Esophagus muscularis mucosa (tissue), 4 donors: ENCODE measurements at regions of chr12 and their contacts with region 1.

Region 1: GRCh38 chr12:95820102-95820703 is 29.6 kb upstream of the NTN4 start:
- DNase-seq: no peak
- H3K4me3 ChIP-seq: no peak overlapping the region
- H3K27ac ChIP-seq: no peak overlapping the region
- H3K4me1 ChIP-seq: peaks cover 0 to 4% (median 1%) of the 10 kb centered on the region in 4 donors
- H3K27me3 ChIP-seq: no peaks in the 10 kb centered on the region
- CTCF ChIP-seq: peak; percentile 40 to 54 (median 53)
- EP300 ChIP-seq: no peak
- POLR2A ChIP-seq: no peak

Region 2: GRCh38 chr12:95582230-95583058 is 237.8 kb before region 1 on chr12:
- intact Hi-C with region 1: loop called (anchors 2 kb)
- DNase-seq: no peak
- H3K4me3 ChIP-seq: no peak overlapping the region
- H3K27ac ChIP-seq: no peak overlapping the region
- H3K4me1 ChIP-seq: peaks cover 0 to 17% (median 4%) of the 10 kb centered on the region in 4 donors
- H3K27me3 ChIP-seq: no peaks in the 10 kb centered on the region
- CTCF ChIP-seq: peak; percentile 51 to 61 (median 53)
- EP300 ChIP-seq: no peak
- POLR2A ChIP-seq: no peak

Region 3: GRCh38 chr12:95623585-95624042 is 196.6 kb before region 1 on chr12:
- intact Hi-C with region 1: loop called (anchors 2 kb)
- DNase-seq: no peak
- H3K4me3 ChIP-seq: no peak overlapping the region
- H3K27ac ChIP-seq: peak overlapping the region; percentile 68 to 85 (median 80)
- H3K4me1 ChIP-seq: peaks cover 18 to 26% (median 22%) of the 10 kb centered on the region in 4 donors
- H3K27me3 ChIP-seq: no peaks in the 10 kb centered on the region
- CTCF ChIP-seq: peak; percentile 68 to 76 (median 69)
- EP300 ChIP-seq: no peak
- POLR2A ChIP-seq: no peak

Region 4: GRCh38 chr12:95884998-95885397 is 64.8 kb after region 1 on chr12:
- intact Hi-C with region 1: no loop called
- DNase-seq: no peak
- H3K4me3 ChIP-seq: no peak overlapping the region
- H3K27ac ChIP-seq: no peak overlapping the region
- H3K4me1 ChIP-seq: no peaks in the 10 kb centered on the region
- H3K27me3 ChIP-seq: peaks cover 0 to 2% (median 0%) of the 10 kb centered on the region in 4 donors
- CTCF ChIP-seq: no peak
- EP300 ChIP-seq: no peak
- POLR2A ChIP-seq: no peak